Ascending aorta (tissue), 2 donors: ENCODE measurements at regions of chr17 and their contacts with region 1.

Region 1: GRCh38 chr17:40803617-40804082 is 3.9 kb upstream of the KRT28 start:
- DNase-seq: peak; percentile 19 to 88
- H3K4me3 ChIP-seq: no peak overlapping the region
- H3K27ac ChIP-seq: no peak overlapping the region
- H3K4me1 ChIP-seq: no peaks in the 10 kb centered on the region
- H3K27me3 ChIP-seq: no peaks in the 10 kb centered on the region
- CTCF ChIP-seq: peak; percentile 74 to 84 (median 76)

Region 2: DNA sequence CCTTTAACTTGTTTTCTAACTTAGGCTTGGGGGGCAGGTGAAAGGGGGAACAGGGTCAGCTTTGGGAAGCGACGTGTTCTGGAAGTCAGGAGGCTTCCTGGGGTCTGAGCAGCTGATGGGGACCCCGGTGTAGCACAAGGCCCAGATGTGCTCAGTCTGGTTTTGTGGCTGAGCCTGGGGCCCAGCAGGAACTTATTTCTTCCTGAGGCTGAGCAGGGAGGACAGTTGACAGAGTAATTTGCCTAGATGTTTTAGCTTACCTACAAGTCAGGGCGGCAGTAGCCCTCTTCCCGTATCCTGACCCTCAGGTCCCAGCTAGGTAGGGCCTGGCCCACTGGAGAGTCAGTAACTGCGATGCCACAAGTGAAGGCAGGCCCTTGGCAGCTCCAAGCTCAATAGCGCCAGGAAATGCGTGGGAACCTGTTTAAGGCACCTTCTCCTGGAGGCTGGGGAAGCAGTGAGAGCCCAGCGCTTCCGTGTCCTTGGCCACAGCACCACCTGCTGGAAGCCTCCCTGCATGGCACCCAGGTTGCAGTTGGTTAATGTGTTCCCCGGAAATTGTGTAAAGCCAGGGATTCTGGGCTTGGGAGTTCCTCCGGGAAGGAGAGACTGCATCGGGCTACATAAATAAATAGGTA is 243.6 kb before region 1 on chr17:
- intact Hi-C with region 1: no loop called
- DNase-seq: peak; percentile 43 to 91
- H3K4me3 ChIP-seq: peak overlapping the region in 1 of 2 donors; percentile 33
- H3K27ac ChIP-seq: peak overlapping the region in 1 of 2 donors; percentile 49
- H3K4me1 ChIP-seq: peaks cover 0 to 10% of the 10 kb centered on the region in 2 donors
- H3K27me3 ChIP-seq: no peaks in the 10 kb centered on the region
- CTCF ChIP-seq: peak; percentile 96 to 98 (median 97)

Region 3: DNA sequence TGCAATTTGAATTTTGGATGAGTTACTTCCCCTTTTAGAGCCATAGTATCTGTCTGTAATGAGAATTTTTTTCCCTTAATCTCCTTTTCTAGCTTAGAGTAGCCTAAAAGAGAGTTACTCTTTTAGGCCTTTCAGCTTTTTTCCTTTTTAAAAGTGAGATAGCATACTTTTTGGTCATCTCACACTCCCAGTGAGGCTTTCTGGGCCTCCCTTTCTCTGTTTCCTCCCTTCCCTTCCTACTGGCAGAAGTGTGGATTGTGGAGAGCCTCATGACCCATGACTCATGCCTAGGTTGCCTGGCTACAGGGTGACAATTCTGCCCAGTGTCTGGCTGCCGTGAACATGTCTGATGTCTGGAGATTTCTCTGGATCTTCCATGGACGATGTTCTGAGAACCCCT is 118.6 kb after region 1 on chr17:
- intact Hi-C with region 1: no loop called
- DNase-seq: peak; percentile 15 to 68
- H3K4me3 ChIP-seq: no peak overlapping the region
- H3K27ac ChIP-seq: peak overlapping the region in 1 of 2 donors; percentile 45
- H3K4me1 ChIP-seq: no peaks in the 10 kb centered on the region
- H3K27me3 ChIP-seq: no peaks in the 10 kb centered on the region
- CTCF ChIP-seq: no peak

Region 4: DNA sequence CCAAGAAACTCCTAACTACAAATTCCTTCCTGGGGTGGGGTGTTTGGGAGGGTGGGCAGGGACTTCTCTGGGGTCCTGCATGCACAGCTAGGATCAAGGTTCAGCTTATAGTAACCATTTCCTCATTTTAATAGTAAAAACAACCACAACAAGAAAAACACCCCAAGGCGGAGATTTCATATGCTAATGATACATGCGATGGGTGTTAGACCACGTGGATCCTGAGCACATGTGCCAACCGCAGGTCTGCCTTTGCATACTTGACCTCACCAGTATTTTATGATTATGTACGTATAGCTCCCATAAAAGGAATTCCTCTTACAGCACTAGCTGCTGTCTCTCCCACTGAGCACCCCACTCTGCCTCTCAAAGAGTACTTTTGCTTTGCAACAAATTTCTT is 312.6 kb after region 1 on chr17:
- intact Hi-C with region 1: no loop called
- DNase-seq: no peak
- H3K4me3 ChIP-seq: no peak overlapping the region
- H3K27ac ChIP-seq: no peak overlapping the region
- H3K4me1 ChIP-seq: no peaks in the 10 kb centered on the region
- H3K27me3 ChIP-seq: no peaks in the 10 kb centered on the region
- CTCF ChIP-seq: no peak

Region 5: DNA sequence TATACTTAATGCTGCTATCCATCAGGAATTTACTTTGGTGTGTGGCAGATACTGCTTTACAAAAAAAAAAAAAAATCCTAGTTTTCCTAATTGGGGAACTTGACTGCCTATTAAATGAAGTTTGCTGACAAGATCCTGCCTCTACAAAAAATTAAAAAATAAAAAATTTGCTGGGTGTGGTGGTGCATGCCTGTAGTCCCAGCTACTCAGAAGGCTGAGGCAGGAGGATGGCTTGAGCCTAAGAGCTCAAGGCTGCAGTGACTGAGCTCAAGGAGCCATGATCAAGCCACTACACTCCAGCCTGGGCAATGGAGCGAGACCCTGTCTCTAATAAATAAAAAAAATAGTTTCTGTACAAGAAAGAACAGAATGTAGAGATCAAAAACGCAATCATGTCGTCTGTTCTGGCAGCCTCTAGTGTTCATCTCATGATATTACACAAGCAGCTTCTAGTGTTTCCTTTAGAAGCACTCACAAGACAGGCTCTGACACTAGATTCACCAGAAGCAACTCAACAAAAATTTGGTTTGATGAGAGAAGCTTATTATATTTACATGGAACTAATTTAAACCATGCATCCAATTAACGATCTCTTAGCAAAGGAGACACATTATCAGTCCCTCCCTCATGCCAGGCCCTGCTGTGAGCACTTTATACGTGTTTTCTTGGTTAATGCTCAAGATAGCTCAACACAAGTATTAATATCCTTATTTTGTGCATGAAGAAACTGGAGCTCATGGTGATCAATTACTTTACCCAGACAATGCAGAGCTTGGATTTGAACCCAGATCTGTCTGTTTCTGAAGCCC is 518.6 kb after region 1 on chr17:
- intact Hi-C with region 1: loop called (anchors 5 kb)
- DNase-seq: no peak
- H3K4me3 ChIP-seq: no peak overlapping the region
- H3K27ac ChIP-seq: no peak overlapping the region
- H3K4me1 ChIP-seq: no peaks in the 10 kb centered on the region
- H3K27me3 ChIP-seq: no peaks in the 10 kb centered on the region
- CTCF ChIP-seq: peak; percentile 30 to 62 (median 52)

Region 6: DNA sequence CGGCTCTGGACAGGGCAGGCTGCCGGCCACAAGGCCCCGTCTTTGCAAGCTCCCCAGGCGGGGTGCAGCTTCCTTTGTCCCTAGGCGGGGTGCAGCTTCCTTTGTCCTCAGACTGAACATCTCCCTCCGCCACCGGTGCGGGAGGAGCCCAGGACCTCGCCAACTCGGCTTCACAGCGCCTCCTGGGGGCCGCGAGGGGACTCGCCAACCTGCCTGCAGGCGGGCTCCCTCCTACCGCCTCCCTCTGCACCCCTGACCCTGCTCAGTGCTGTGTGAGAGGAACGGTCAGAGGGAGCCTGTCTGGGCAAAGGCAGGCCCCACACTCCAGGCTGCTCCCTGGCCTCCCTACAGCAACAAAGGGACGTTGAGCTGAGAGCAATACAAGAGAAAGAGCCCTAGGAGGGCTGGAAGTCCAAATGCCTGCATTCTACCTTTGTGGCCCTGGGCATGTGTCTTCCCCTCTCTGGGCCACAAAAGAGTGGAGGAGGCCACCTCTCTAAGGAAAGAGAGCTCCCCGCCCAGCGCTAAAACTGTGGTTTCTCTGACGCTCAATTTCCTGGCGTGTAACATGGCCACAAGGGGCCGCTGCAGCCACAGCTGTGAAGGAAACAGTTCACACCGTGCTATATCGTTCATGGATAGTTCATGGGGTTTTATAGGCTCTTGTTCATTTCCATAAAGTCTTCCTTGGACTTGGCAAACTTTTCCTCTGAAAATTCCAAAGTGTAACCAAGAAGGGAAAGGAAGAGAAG is 745.4 kb after region 1 on chr17:
- intact Hi-C with region 1: loop called (anchors 5 kb)
- DNase-seq: peak; percentile 27 to 91
- H3K4me3 ChIP-seq: peak overlapping the region; percentile 24 to 50
- H3K27ac ChIP-seq: peak overlapping the region; percentile 65 to 81
- H3K4me1 ChIP-seq: peaks cover 11 to 15% of the 10 kb centered on the region in 2 donors
- H3K27me3 ChIP-seq: no peaks in the 10 kb centered on the region
- CTCF ChIP-seq: peak; percentile 76 to 81 (median 80)